ENCODE measurements at regions of chr10 and their contacts with region 1.

Region 1: GRCh38 chr10:69237528-69238159 is 17.5 kb downstream of the HKDC1 start:
- DNase-seq: peak; percentile 93
- H3K4me3 ChIP-seq: no peak overlapping the region
- H3K27ac ChIP-seq: no peak overlapping the region
- H3K4me1 ChIP-seq: peaks cover 0 to 12% (median 0%) of the 10 kb centered on the region in 4 donors
- H3K27me3 ChIP-seq: no peaks in the 10 kb centered on the region
- CTCF ChIP-seq: peak; percentile 82 to 98 (median 92)
- EP300 ChIP-seq: no peak
- POLR2A ChIP-seq: no peak

Region 2: GRCh38 chr10:69392481-69393000 is 154.9 kb after region 1 on chr10:
- intact Hi-C with region 1: loop called (anchors 1 kb)
- DNase-seq: peak; percentile 95
- H3K4me3 ChIP-seq: no peak overlapping the region
- H3K27ac ChIP-seq: peak overlapping the region; percentile 6 to 44 (median 20)
- H3K4me1 ChIP-seq: peaks cover 0 to 12% (median 7%) of the 10 kb centered on the region in 4 donors
- H3K27me3 ChIP-seq: no peaks in the 10 kb centered on the region
- CTCF ChIP-seq: peak; percentile 93 to 99 (median 98)
- EP300 ChIP-seq: no peak
- POLR2A ChIP-seq: no peak

Region 3: GRCh38 chr10:69515699-69516259 is 278.1 kb after region 1 on chr10:
- intact Hi-C with region 1: loop called (anchors 5 kb)
- DNase-seq: peak; percentile 79
- H3K4me3 ChIP-seq: no peak overlapping the region
- H3K27ac ChIP-seq: no peak overlapping the region
- H3K4me1 ChIP-seq: no peaks in the 10 kb centered on the region
- H3K27me3 ChIP-seq: no peaks in the 10 kb centered on the region
- CTCF ChIP-seq: peak; percentile 28 to 64 (median 56)
- EP300 ChIP-seq: no peak
- POLR2A ChIP-seq: no peak